ENCODE measurements at regions of chr20 and their contacts with region 1.

Region 1: GRCh38 chr20:38997622-38998021 is 35.5 kb downstream of the DHX35 start:
- DNase-seq: peak; percentile 92
- ATAC-seq: peak; percentile 87
- H3K4me3 Mint-ChIP-seq: peak overlapping the region; percentile 25
- H3K27ac Mint-ChIP-seq: peak overlapping the region; percentile 75
- H3K4me1 Mint-ChIP-seq: peaks cover 40% of the 10 kb centered on the region
- H3K27me3 Mint-ChIP-seq: no peaks in the 10 kb centered on the region

Region 2: GRCh38 chr20:38926142-38926933 is 71.3 kb before region 1 on chr20 and contains the start of gene FAM83D:
- CTCF ChIA-PET with region 1: interaction called, 19 read pairs
- DNase-seq: peak; percentile 98
- ATAC-seq: peak; percentile 97
- H3K4me3 Mint-ChIP-seq: peak within 1 kb of the TSS; percentile 81
- H3K27ac Mint-ChIP-seq: peak within 1 kb of the TSS; percentile 72
- H3K4me1 Mint-ChIP-seq: peaks cover 42% of the 10 kb centered on the region
- H3K27me3 Mint-ChIP-seq: no peaks in the 10 kb centered on the region
- total RNA-seq, gene FAM83D: 23.1 to 28.4 TPM

Region 3: GRCh38 chr20:38962044-38962927 is 35.3 kb before region 1 on chr20 and contains the start of gene DHX35:
- CTCF ChIA-PET with region 1: interaction called, 33 read pairs
- DNase-seq: peak; percentile 99
- ATAC-seq: peak; percentile 99
- H3K4me3 Mint-ChIP-seq: peak within 1 kb of the TSS; percentile 87
- H3K27ac Mint-ChIP-seq: peak within 1 kb of the TSS; percentile 97
- H3K4me1 Mint-ChIP-seq: peaks cover 29% of the 10 kb centered on the region
- H3K27me3 Mint-ChIP-seq: no peaks in the 10 kb centered on the region
- total RNA-seq, gene DHX35: 10.5 to 12.9 TPM

Region 4: GRCh38 chr20:38985603-38986170 is 11.9 kb before region 1 on chr20:
- CTCF ChIA-PET with region 1: interaction called, 17 read pairs
- DNase-seq: no peak
- ATAC-seq: no peak
- H3K4me3 Mint-ChIP-seq: no peak overlapping the region
- H3K27ac Mint-ChIP-seq: no peak overlapping the region
- H3K4me1 Mint-ChIP-seq: peaks cover 36% of the 10 kb centered on the region
- H3K27me3 Mint-ChIP-seq: no peaks in the 10 kb centered on the region

Region 5: GRCh38 chr20:39222101-39222500 is 224.5 kb after region 1 on chr20:
- CTCF ChIA-PET with region 1: no interaction called
- DNase-seq: no peak
- ATAC-seq: no peak
- H3K4me3 Mint-ChIP-seq: no peak overlapping the region
- H3K27ac Mint-ChIP-seq: no peak overlapping the region
- H3K4me1 Mint-ChIP-seq: no peaks in the 10 kb centered on the region
- H3K27me3 Mint-ChIP-seq: peaks cover 17% of the 10 kb centered on the region